CD4-positive, alpha-beta memory T cell (primary cell): ENCODE measurements at regions of chr5 and their contacts with region 1.

Region 1: GRCh38 chr5:170293273-170293672 is 4.3 kb downstream of the LCP2 start:
- DNase-seq: peak in 4 of 5 donors; percentile 47 to 77 (median 50)
- H3K4me3 ChIP-seq: peak overlapping the region; percentile 33 to 97
- H3K4me3 Mint-ChIP-seq: peak overlapping the region; percentile 95 to 99 (median 98)
- H3K27ac ChIP-seq: peak overlapping the region; percentile 90
- H3K27ac Mint-ChIP-seq: peak overlapping the region; percentile 87 to 100 (median 96)
- H3K4me1 ChIP-seq: peaks cover 76% of the 10 kb centered on the region
- H3K4me1 Mint-ChIP-seq: peaks cover 59 to 100% (median 67%) of the 10 kb centered on the region in 4 donors
- H3K27me3 ChIP-seq: no peaks in the 10 kb centered on the region
- H3K27me3 Mint-ChIP-seq: no peaks in the 10 kb centered on the region

Region 2: DNA sequence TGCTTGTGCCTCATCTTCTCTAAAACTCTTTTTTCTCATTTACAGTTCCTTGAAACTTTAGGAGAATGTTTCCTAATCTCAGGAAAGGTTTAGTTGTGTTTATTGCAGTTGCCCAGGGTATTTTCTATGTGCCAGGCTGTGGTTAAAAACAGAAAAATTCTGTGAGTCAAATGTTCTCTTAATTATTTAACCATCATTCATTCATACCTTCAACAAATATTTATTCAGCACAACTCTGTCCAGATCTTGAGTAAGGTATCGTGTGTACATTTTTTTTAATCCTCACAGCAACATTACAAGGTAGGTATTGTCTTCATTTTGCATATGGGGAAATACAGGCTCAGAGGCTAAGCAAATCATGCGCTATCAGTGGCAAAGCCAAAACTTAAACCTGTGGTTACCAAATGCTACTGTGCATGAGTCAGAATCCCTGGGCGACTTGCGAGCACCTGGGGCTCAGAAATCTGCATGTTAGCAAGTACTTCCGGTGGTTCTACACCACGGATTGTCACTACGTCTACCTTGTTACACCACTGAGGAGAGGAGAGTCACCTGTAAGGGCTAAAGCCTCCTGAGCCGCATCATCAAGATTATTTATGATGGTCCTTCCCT is 39.3 kb before region 1 on chr5:
- CTCF ChIA-PET with region 1: interaction called, 3 read pairs
- POLR2A ChIA-PET with region 1: interaction called, 12 read pairs
- intact Hi-C with region 1: loop called (anchors 2 kb)
- DNase-seq: peak; percentile 72 to 93 (median 79)
- H3K4me3 ChIP-seq: no peak overlapping the region
- H3K4me3 Mint-ChIP-seq: peak overlapping the region in 7 of 8 donors; percentile 2 to 78 (median 11)
- H3K27ac ChIP-seq: peak overlapping the region; percentile 60
- H3K27ac Mint-ChIP-seq: peak overlapping the region; percentile 82 to 97 (median 92)
- H3K4me1 ChIP-seq: peaks cover 51% of the 10 kb centered on the region
- H3K4me1 Mint-ChIP-seq: peaks cover 27 to 59% (median 42%) of the 10 kb centered on the region in 4 donors
- H3K27me3 ChIP-seq: no peaks in the 10 kb centered on the region
- H3K27me3 Mint-ChIP-seq: no peaks in the 10 kb centered on the region

Region 3: DNA sequence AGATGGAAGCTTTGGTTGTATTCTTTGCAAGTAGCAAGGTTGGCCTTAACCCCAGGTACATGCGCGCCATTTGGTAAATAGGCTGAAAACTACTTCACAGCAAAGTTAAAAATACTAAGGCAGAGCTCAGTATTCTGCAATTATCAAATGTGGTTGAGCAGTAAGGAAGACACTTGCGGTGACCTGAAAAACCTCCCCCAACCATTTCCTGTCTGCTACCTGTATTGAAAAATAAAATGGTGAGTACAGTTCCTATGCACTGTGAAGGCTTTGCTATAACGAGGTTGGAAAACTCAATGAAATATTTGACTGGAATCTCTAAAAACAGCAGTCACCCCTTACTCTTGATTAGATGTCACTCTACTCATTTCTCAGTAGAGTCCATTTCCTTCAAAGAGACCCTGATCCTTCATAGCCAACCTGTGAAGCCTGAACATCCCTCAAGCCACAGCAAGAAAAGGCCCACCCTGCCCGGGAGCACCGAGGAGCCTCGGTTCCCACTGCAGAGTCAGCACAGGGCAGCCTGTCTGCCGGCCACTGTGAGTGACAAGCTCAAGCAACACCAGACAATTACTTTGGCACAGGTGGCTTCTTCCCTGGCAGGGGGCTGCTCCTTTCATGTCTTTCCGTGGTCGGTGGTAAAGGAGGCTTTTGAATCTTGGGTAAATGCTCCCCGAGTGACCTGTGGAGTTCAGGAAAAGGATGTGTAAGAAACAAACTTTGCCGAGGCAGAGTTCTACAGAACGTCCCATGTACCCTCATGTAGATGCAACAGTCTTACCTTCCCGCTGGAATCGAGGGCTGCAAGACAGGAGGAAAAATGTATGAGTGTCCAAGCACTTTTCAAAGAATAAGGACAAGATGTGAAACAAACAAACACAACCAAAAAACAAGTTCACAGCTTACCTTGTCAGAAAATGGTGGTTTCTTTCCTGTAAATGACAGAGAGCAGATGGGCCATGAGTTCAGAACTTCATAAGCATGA is 30.9 kb before region 1 on chr5:
- CTCF ChIA-PET with region 1: interaction called, 185 read pairs
- POLR2A ChIA-PET with region 1: interaction called, 1,265 read pairs
- intact Hi-C with region 1: no loop called
- DNase-seq: peak; percentile 77 to 85 (median 80)
- H3K4me3 ChIP-seq: peak overlapping the region; percentile 4 to 28
- H3K4me3 Mint-ChIP-seq: peak overlapping the region; percentile 59 to 82 (median 72)
- H3K27ac ChIP-seq: peak overlapping the region; percentile 67
- H3K27ac Mint-ChIP-seq: peak overlapping the region; percentile 82 to 98 (median 95)
- H3K4me1 ChIP-seq: peaks cover 80% of the 10 kb centered on the region
- H3K4me1 Mint-ChIP-seq: peaks cover 51 to 89% (median 74%) of the 10 kb centered on the region in 4 donors
- H3K27me3 ChIP-seq: no peaks in the 10 kb centered on the region
- H3K27me3 Mint-ChIP-seq: no peaks in the 10 kb centered on the region

Region 4: DNA sequence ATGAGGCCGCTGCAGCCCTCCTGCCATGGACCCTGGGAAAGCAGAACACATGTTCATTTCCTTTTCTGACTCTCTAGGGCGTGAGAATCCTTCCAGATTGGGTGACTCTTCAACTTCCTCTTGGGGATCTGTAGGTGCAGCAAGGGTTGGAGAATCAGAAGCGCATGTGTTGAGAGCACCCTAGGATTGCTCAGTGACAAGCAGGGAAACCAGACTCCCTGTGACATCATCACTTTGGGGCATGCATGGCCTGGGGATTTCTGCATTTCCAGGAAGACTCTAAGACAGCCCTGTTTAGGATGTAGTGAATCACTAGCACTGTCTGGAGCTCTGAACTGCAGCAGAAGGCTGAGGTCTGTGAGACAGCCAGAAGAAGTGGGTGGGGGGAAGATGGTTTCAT is 19.4 kb after region 1 on chr5:
- CTCF ChIA-PET with region 1: interaction called, 32 read pairs
- POLR2A ChIA-PET with region 1: interaction called, 1,265 read pairs
- intact Hi-C with region 1: loop called (anchors 2 kb)
- DNase-seq: peak in 2 of 5 donors; percentile 39 to 93
- H3K4me3 ChIP-seq: peak overlapping the region; percentile 3 to 42
- H3K4me3 Mint-ChIP-seq: peak overlapping the region; percentile 63 to 91 (median 76)
- H3K27ac ChIP-seq: peak overlapping the region; percentile 59
- H3K27ac Mint-ChIP-seq: peak overlapping the region; percentile 84 to 97 (median 96)
- H3K4me1 ChIP-seq: peaks cover 48% of the 10 kb centered on the region
- H3K4me1 Mint-ChIP-seq: peaks cover 41 to 69% (median 49%) of the 10 kb centered on the region in 4 donors
- H3K27me3 ChIP-seq: no peaks in the 10 kb centered on the region
- H3K27me3 Mint-ChIP-seq: no peaks in the 10 kb centered on the region